GM13977 (cell line): ENCODE measurements at regions of chr15 and their contacts with region 1.

Region 1: DNA sequence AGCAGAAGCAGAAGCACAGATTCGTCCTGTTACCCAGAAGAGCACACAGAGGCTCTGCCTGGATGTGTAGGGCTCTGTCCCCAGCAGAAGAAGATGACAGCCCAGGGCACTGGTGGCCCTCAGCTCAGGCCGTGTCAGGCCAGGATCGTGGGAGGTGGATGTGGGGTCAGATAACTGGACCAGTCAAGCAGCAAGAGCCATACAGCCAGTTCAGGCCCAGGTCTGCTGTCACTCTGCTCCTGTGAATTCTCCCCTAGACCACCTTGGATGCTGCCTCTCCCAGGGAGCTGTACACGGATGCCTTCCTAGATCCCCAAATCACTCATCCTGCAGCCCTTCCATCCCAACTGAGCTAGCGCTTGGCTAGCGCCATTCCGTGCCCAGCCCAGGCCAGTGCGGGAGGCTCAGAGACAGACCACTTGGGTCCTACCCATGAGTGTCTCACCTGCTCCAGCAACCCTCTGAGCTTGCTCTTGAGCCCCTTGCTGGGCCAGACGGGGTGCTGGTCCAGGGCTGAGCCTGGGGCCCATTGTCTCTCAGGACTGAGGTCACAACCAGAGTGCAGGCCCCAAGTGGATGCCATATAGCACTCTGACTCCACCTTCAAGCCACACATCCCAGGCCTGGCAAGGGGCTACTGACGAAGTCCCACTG is 17.6 kb downstream of the SH2D7 start:
- DNase-seq: no peak
- CTCF ChIP-seq: no peak

Region 2: DNA sequence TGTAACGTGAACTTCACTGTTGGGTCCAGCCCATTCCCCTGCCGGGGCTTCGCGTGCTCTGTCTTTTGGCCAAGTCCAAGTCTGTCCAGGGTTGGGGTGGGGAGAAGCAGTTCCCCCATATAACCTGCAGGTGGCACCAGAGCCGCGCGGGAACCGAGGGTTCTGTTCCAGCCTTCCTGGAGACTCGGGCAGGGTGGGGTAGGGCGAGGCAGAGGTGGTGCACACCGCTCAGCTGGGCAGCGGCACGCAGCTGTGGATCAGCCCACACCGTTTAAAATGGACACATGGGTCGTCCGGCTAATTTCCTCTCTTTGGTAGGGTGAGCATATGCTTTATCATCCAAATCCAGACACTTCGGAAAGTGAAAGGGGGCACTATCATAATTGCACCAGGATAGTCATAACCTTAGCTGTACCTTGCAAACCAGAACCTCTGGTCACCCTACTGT is 150.5 kb before region 1 on chr15:
- in situ Hi-C with region 1: loop called (anchors 5 kb)
- DNase-seq: peak; percentile 79
- CTCF ChIP-seq: peak; percentile 97